Natural killer cell (primary cell): ENCODE measurements at regions of chr2 and their contacts with region 1.

Region 1: GRCh38 chr2:133886735-133887660 is 318.7 kb upstream of the NCKAP5 start:
- DNase-seq: peak in 1 of 2 donors; percentile 68
- ATAC-seq: peak in 1 of 3 donors; percentile 44
- H3K4me3 ChIP-seq: no peak overlapping the region
- H3K4me3 Mint-ChIP-seq: no peak overlapping the region
- H3K27ac ChIP-seq: no peak overlapping the region
- H3K27ac Mint-ChIP-seq: no peak overlapping the region
- H3K4me1 ChIP-seq: no peaks in the 10 kb centered on the region
- H3K4me1 Mint-ChIP-seq: no peaks in the 10 kb centered on the region
- H3K27me3 ChIP-seq: no peaks in the 10 kb centered on the region
- H3K27me3 Mint-ChIP-seq: peaks cover 11 to 19% of the 10 kb centered on the region in 2 donors
- CTCF ChIP-seq: no peak

Region 2: DNA sequence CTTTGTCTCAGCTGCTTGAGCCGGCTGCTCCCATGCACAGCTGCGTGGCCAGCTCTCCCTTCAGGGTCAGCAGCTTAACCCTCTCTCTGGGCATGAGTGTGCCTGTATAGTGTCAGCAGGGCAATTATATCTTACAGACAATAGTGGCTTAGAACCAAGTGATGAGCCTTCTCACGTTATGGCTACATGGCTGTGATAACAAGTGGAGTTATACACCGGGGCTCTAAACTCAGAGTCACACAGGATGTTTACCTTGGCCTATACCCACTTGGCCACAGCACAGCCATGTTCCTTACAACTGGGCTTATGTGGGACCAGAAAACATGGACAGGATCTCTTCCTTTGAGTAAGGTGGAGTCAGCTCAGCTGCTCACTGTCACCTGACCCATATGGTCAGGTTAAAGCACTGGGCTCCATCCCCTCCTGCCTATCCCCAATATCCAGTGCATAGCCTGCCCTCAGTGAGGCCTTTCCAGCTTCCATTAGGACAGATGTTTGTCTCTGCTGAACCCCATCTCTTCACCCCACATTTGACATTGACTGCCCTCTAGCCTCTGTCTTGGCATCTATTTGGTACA is 24.5 kb before region 1 on chr2:
- intact Hi-C with region 1: no loop called
- DNase-seq: no peak
- ATAC-seq: no peak
- H3K4me3 ChIP-seq: no peak overlapping the region
- H3K4me3 Mint-ChIP-seq: no peak overlapping the region
- H3K27ac ChIP-seq: no peak overlapping the region
- H3K27ac Mint-ChIP-seq: no peak overlapping the region
- H3K4me1 ChIP-seq: no peaks in the 10 kb centered on the region
- H3K4me1 Mint-ChIP-seq: no peaks in the 10 kb centered on the region
- H3K27me3 ChIP-seq: no peaks in the 10 kb centered on the region
- H3K27me3 Mint-ChIP-seq: no peaks in the 10 kb centered on the region
- CTCF ChIP-seq: no peak

Region 3: DNA sequence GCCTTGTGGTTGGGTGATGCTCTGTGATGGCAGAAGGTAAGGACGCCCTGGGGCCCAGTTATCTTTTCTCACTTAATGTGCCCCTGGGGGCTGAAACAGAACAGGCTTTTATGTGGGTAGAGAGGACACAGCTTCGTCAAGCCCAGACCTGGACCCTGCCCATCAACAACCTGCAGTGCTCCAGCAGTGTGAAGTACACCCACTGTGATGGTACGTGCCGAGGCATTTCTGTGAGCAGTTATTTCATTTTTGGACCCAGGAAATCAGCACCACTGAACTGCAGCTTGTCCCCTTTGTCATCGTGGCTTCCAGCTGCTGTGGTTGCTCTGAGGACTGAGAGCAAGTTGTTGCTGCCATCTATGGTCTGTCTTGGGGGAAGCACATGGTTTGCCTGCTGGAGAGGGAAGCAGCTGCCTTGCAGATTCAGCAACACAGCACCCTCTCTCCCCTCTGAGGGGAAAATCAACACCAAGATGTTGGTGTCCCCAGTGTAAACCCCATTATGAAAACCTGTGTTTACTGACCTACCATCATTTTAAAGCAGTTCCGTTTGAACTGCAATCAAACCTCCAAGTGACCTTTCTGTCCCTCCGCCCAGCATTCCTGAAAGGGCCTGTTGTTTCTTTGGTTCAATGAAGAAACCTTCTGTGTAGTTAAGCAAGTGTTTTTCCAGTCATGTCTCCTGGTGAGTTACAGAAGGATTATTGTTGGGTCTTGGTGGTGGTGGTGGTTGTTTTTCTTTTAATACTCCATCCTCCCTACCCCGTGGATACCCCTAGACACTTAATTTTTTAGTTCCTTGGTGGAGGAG is 525.0 kb after region 1 on chr2:
- intact Hi-C with region 1: loop called (anchors 2 kb)
- DNase-seq: peak; percentile 34 to 84
- ATAC-seq: peak; percentile 86 to 95 (median 93)
- H3K4me3 ChIP-seq: no peak overlapping the region
- H3K4me3 Mint-ChIP-seq: no peak overlapping the region
- H3K27ac ChIP-seq: peak overlapping the region; percentile 2
- H3K27ac Mint-ChIP-seq: no peak overlapping the region
- H3K4me1 ChIP-seq: peaks cover 28% of the 10 kb centered on the region
- H3K4me1 Mint-ChIP-seq: peaks cover 45 to 46% of the 10 kb centered on the region in 2 donors
- H3K27me3 ChIP-seq: no peaks in the 10 kb centered on the region
- H3K27me3 Mint-ChIP-seq: no peaks in the 10 kb centered on the region
- CTCF ChIP-seq: peak; percentile 43